ENCODE measurements at regions of chr17 and their contacts with region 1.

Region 1: DNA sequence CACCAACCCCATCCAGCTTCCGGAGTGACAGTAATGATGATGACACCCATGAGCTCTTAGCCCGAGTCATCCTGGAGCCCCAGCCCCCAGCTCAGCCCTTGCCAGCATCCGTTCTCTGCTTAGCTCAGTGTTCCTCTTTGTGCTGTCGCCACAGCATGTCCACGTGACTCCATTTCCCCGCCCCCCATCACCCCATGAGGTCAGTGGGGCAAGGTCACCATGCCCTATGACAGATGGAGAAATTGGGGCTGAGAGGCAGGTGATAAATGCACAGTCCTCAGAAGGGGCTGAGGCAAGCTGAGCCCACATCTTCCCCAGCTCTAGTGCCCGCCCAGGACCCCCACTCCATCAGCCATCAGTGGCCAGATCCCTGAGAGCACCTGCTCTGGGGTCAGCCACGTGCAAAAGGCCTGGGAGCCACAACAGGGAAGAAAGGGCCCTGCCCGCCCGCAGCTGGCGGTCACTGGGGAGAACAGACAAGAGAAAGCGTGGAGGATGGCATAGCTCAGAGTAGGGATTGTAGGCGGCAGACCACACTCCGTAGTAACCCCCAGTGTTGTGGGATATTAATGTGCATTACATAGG is 17.1 kb downstream of the ITGB4 start:
- DNase-seq: peak; percentile 27
- ATAC-seq: no peak; the same call in 1 of the 2 replicates
- H3K4me3 ChIP-seq: no peak overlapping the region
- H3K27ac ChIP-seq: no peak overlapping the region
- H3K4me1 ChIP-seq: no peaks in the 10 kb centered on the region
- H3K27me3 ChIP-seq: peaks cover 2% of the 10 kb centered on the region; the same call in 1 of the 2 replicates
- CTCF ChIP-seq: no peak
- POLR2A ChIP-seq: no peak
- RAD21 ChIP-seq: no peak

Region 2: DNA sequence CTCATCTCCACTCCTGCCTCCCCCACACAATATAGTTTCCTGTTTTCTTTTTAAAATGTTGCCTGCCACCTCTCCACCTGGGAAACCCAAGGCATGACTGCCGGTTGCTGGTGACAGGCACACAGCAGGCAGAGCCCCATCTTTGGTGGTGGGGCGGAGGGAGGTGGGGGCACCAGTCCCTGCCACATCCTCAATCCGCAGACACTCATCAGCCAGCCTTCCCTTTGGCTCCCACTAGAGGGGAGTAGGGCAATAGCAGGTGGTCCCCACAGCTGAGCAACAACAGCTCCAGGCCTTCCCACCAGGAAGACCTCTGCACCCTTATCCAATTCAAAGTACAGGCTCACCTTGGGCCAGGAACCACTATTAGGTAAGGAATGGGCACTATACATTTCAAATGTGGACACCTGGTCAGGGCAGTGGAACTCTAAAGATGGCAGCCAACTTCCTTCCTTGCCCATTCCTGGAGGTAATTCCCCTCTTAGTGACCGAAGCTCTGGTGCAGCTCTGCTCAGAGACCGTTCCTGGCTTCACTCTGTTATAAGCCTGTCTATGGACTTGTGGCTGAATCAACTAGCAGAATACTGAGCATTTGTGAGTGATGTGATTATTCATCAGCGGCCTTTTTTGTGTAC is 85.3 kb before region 1 on chr17:
- CTCF ChIA-PET with region 1: interaction called, 12 read pairs
- POLR2A ChIA-PET with region 1: no interaction called
- dilution Hi-C with region 1: no loop called
- in situ Hi-C with region 1: no loop called
- intact Hi-C with region 1: no loop called
- DNase-seq: peak; percentile 27
- ATAC-seq: peak; percentile 89
- H3K4me3 ChIP-seq: no peak overlapping the region
- H3K27ac ChIP-seq: no peak overlapping the region
- H3K4me1 ChIP-seq: no peaks in the 10 kb centered on the region
- H3K27me3 ChIP-seq: no peaks in the 10 kb centered on the region
- CTCF ChIP-seq: peak; percentile 62
- POLR2A ChIP-seq: no peak
- RAD21 ChIP-seq: peak; percentile 53

Region 3: DNA sequence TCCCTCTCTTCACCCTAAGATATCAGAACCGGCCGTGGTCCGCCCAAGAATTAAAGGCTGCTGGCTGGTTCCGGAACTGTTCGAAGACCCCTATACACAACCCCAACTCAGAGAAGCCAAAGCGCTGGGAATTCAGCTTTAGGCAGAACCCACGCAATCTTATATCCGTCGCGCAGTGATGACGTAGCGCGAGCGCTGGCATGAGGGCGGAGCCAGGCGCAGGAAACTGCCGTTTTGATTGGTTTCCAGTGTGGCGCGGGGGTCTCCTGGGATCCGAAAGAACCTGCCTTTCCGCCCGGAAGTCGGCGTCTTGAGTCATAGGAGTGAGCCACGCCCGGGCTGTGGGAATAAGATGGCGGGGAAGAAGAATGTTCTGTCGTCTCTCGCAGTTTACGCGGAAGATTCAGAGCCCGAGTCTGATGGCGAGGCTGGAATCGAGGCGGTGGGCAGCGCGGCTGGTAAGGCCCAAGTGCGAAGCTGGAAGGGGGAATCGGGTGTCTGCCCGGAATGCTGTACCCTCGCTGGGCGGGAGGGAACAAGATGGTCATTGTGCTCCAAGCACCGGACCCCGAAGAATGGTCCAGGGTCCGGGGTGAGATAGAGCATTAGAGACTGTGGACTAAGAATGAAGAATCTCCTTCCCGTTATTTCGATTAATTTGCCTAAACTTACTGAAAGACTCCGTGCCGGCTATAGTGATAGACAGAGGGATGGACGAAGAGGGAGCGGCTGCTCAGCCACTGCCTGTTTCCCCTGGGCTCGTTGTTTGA is 71.1 kb before region 1 on chr17 and contains the starts of genes RECQL5 and SAP30BP:
- CTCF ChIA-PET with region 1: no interaction called
- POLR2A ChIA-PET with region 1: no interaction called
- dilution Hi-C with region 1: no loop called
- in situ Hi-C with region 1: no loop called
- intact Hi-C with region 1: no loop called
- DNase-seq: peak; percentile 98
- ATAC-seq: peak; percentile 100
- H3K4me3 ChIP-seq: peak within 1 kb of the TSS; percentile 79
- H3K27ac ChIP-seq: peak within 1 kb of the TSS; percentile 82
- H3K4me1 ChIP-seq: peaks cover 5% of the 10 kb centered on the region
- H3K27me3 ChIP-seq: no peaks in the 10 kb centered on the region
- CTCF ChIP-seq: no peak
- POLR2A ChIP-seq: peak; percentile 92
- RAD21 ChIP-seq: no peak
- total RNA-seq, gene RECQL5: 7.3 and 8.6 TPM in 2 replicates
- total RNA-seq, gene SAP30BP: 70.4 and 82.5 TPM in 2 replicates

Region 4: GRCh38 chr17:75679706-75680442 is 58.4 kb before region 1 on chr17:
- CTCF ChIA-PET with region 1: no interaction called
- POLR2A ChIA-PET with region 1: interaction called, 10 read pairs
- dilution Hi-C with region 1: no loop called
- in situ Hi-C with region 1: no loop called
- intact Hi-C with region 1: no loop called
- DNase-seq: no peak
- ATAC-seq: peak; percentile 39; the same call in 1 of the 2 replicates
- H3K4me3 ChIP-seq: no peak overlapping the region
- H3K27ac ChIP-seq: no peak overlapping the region
- H3K4me1 ChIP-seq: peaks cover 8% of the 10 kb centered on the region
- H3K27me3 ChIP-seq: no peaks in the 10 kb centered on the region
- CTCF ChIP-seq: no peak
- POLR2A ChIP-seq: no peak
- RAD21 ChIP-seq: no peak

Region 5: DNA sequence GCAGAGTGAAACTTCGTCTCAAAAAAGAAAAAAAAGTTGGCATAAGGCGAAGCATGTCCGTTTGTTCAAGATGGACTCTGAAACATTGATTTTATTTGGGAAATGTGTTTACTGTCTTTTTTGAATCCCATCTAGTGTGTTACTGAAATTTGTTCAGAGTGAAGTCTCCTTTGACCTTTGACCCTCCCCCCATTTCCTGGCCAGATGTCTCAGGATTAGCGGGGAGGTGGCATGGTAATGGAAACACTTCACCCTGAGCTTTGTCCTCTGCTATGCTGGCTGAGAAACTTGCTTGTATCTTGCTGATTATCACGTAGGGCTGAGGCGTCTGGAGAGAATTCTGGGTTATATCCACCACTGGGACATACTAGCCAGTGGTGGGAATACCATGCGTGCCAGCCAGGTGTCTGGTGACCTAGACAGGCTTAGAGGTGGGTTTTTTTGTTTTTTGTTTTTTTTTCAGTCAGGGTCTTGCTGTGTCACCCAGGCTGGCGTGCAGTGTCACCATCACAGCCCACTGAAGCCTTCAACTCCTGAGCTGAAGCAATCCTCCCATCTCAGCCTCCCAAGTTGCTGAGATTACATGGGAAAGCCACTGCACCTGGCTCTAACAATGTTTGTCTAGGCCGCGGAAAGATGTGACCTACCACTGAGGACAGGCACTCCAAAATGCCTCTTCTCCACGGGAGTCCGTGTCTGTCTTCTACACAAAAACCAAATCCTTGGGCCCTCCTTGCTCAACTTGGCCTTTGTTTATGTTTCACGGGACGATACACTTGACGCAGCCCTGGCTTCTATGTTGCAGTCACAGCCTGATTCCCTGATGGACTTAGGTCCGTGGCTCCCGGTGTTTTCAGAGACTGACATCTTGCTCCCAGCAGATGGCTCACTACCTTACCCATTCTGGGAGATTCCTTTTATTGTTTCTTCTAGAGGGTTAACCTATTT is 33.3 kb after region 1 on chr17:
- CTCF ChIA-PET with region 1: no interaction called
- POLR2A ChIA-PET with region 1: no interaction called
- dilution Hi-C with region 1: no loop called
- in situ Hi-C with region 1: no loop called
- intact Hi-C with region 1: no loop called
- DNase-seq: peak; percentile 25
- ATAC-seq: no peak
- H3K4me3 ChIP-seq: no peak overlapping the region
- H3K27ac ChIP-seq: no peak overlapping the region
- H3K4me1 ChIP-seq: no peaks in the 10 kb centered on the region
- H3K27me3 ChIP-seq: no peaks in the 10 kb centered on the region
- CTCF ChIP-seq: no peak; the same call in 1 of the 2 replicates
- POLR2A ChIP-seq: no peak
- RAD21 ChIP-seq: no peak

Region 6: DNA sequence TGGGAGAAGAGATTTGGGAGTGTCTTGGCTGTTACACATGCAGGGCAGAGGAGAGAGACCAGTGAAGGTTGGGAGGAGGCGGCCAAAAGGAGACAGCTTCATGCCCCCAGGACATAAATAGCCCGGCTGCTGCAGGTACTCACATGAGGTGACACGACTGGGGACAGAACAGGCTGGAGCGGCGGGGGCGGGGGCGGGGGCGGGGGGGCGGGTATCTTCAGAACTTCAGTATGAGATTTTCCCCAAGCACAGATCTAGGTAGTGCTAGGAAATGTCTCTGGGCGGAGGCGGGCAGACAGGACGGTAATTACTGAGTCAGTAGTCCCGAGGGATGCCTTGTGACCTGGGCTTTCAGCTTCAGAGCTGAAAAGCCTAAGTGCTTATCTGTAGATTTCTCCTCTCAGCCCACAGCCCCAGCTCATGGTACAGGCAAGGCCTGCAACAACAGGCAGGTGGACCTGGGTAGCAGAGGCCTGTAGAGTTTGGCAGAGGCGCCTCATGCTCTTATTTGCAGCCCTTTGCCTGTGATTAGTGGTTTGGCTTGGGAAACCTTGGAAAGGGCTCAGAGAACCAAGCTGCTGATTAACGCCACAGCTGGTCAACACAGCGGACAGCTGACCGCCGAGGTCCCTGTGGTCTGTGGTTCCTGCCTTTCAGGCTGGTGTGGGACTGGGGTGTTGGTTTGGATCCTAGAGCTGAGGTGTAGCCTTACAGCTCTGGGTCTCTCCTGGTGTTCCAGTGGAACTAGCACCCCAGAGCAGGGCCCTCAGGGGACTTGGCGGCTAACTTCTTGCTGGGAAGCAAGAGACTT is 70.8 kb after region 1 on chr17:
- CTCF ChIA-PET with region 1: no interaction called
- POLR2A ChIA-PET with region 1: no interaction called
- dilution Hi-C with region 1: no loop called
- in situ Hi-C with region 1: no loop called
- intact Hi-C with region 1: no loop called
- DNase-seq: peak; percentile 37
- ATAC-seq: peak; percentile 59; the same call in 1 of the 2 replicates
- H3K4me3 ChIP-seq: no peak overlapping the region
- H3K27ac ChIP-seq: no peak overlapping the region
- H3K4me1 ChIP-seq: no peaks in the 10 kb centered on the region; the same call in 1 of the 2 replicates
- H3K27me3 ChIP-seq: no peaks in the 10 kb centered on the region
- CTCF ChIP-seq: no peak
- POLR2A ChIP-seq: no peak
- RAD21 ChIP-seq: no peak

Region 7: GRCh38 chr17:76111956-76112355 is 373.6 kb after region 1 on chr17:
- CTCF ChIA-PET with region 1: no interaction called
- POLR2A ChIA-PET with region 1: no interaction called
- dilution Hi-C with region 1: no loop called
- in situ Hi-C with region 1: no loop called
- intact Hi-C with region 1: no loop called
- DNase-seq: no peak
- ATAC-seq: no peak
- H3K4me3 ChIP-seq: no peak overlapping the region
- H3K27ac ChIP-seq: no peak overlapping the region
- H3K4me1 ChIP-seq: no peaks in the 10 kb centered on the region
- H3K27me3 ChIP-seq: no peaks in the 10 kb centered on the region
- CTCF ChIP-seq: no peak
- POLR2A ChIP-seq: no peak
- RAD21 ChIP-seq: no peak